ENCODE measurements at regions of chr2 and their contacts with region 1.

Region 1: GRCh38 chr2:114550895-114551793 is 108.7 kb downstream of the DPP10 start:
- DNase-seq: no peak
- ATAC-seq: no peak
- H3K4me3 Mint-ChIP-seq: no peak overlapping the region
- H3K27ac Mint-ChIP-seq: no peak overlapping the region
- H3K4me1 Mint-ChIP-seq: no peaks in the 10 kb centered on the region
- H3K27me3 Mint-ChIP-seq: peaks cover 2% of the 10 kb centered on the region
- CTCF ChIP-seq: no peak

Region 2: GRCh38 chr2:113686537-113686936 is 864.6 kb before region 1 on chr2:
- CTCF ChIA-PET with region 1: no interaction called
- POLR2A ChIA-PET with region 1: interaction called, 16 read pairs
- intact Hi-C with region 1: no loop called
- DNase-seq: no peak
- ATAC-seq: no peak
- H3K4me3 Mint-ChIP-seq: no peak overlapping the region
- H3K27ac Mint-ChIP-seq: no peak overlapping the region
- H3K4me1 Mint-ChIP-seq: peaks cover 12% of the 10 kb centered on the region
- H3K27me3 Mint-ChIP-seq: no peaks in the 10 kb centered on the region
- CTCF ChIP-seq: no peak

Region 3: GRCh38 chr2:113965644-113966043 is 585.5 kb before region 1 on chr2:
- CTCF ChIA-PET with region 1: no interaction called
- POLR2A ChIA-PET with region 1: no interaction called
- intact Hi-C with region 1: loop called (anchors 10 kb)
- DNase-seq: no peak
- ATAC-seq: peak; percentile 85
- H3K4me3 Mint-ChIP-seq: no peak overlapping the region
- H3K27ac Mint-ChIP-seq: peak overlapping the region; percentile 41
- H3K4me1 Mint-ChIP-seq: peaks cover 30% of the 10 kb centered on the region
- H3K27me3 Mint-ChIP-seq: no peaks in the 10 kb centered on the region
- CTCF ChIP-seq: no peak